Naive thymus-derived CD4-positive, alpha-beta T cell (primary cell): ENCODE measurements at regions of chr2 and their contacts with region 1.

Region 1: GRCh38 chr2:148644883-148645538 is 460 bp downstream of the EPC2 start:
- DNase-seq: peak; percentile 90 to 99 (median 95)
- ATAC-seq: peak; percentile 84
- H3K4me3 ChIP-seq: peak overlapping the region; percentile 69
- H3K4me3 Mint-ChIP-seq: peak overlapping the region; percentile 79 to 99 (median 96)
- H3K27ac ChIP-seq: peak overlapping the region; percentile 94
- H3K27ac Mint-ChIP-seq: peak overlapping the region; percentile 81 to 99 (median 97)
- H3K4me1 ChIP-seq: peaks cover 21 to 22% of the 10 kb centered on the region in 2 donors
- H3K4me1 Mint-ChIP-seq: peaks cover 32 to 48% (median 37%) of the 10 kb centered on the region in 7 donors
- H3K27me3 ChIP-seq: no peaks in the 10 kb centered on the region
- H3K27me3 Mint-ChIP-seq: peaks cover 0 to 12% (median 0%) of the 10 kb centered on the region in 5 donors

Region 2: DNA sequence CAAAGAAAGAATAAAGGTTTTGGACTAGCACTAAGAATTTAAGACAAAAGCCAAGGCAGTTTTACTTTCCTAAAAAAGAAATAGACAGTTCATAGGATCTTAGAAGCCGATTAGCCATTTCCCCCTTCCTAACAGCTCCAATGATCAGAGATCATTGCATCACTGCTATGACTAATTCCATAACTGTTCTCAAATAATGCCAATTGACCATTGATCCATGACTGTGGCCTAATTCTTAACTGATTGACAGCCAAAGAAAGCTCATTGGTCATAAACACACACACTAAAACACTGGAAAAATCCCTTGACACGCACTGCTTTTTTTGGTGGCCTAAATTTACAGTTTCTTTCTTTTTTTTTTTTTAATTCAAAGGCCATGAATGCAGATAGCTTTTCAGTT is 1145.2 kb before region 1 on chr2:
- CTCF ChIA-PET with region 1: no interaction called
- POLR2A ChIA-PET with region 1: no interaction called
- intact Hi-C with region 1: loop called in 1 of 2 experiments (anchors 10 kb)
- DNase-seq: no peak
- ATAC-seq: no peak
- H3K4me3 ChIP-seq: no peak overlapping the region
- H3K4me3 Mint-ChIP-seq: peak overlapping the region in 9 of 10 donors; percentile 40 to 80 (median 65)
- H3K27ac ChIP-seq: no peak overlapping the region
- H3K27ac Mint-ChIP-seq: peak overlapping the region in 8 of 9 donors; percentile 24 to 93 (median 65)
- H3K4me1 ChIP-seq: peaks cover 9 to 13% of the 10 kb centered on the region in 2 donors
- H3K4me1 Mint-ChIP-seq: peaks cover 23 to 61% (median 35%) of the 10 kb centered on the region in 7 donors
- H3K27me3 ChIP-seq: no peaks in the 10 kb centered on the region
- H3K27me3 Mint-ChIP-seq: no peaks in the 10 kb centered on the region

Region 3: DNA sequence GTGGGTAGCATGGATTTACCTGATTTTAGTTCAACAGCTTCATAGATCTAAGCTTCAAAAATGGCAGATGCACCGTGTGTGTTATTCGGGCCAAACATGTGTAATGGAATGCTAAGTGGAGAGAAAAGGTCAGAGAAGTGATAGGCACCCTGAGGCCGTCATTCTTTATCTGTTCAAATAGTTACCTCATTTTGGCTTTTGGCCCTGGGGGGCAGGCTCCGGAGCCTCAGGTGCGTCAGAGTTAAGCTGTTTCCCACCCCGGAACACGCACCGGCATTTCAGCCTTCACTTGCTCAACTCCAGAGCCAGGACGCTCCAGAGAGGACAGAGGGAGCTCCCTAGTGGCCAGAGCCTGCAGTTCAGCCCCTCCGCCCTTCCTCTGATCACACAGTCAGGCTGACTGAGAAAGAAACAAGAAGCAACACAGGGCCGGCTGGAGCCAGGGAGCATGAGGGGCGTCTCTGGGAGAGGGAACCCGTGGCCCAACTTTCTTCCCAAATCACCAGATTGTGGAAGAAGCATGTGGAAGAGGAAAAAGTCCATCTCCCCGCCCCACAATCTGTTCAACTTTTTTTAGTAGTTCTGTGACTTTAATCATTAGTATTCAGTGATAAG is 135.6 kb before region 1 on chr2:
- CTCF ChIA-PET with region 1: interaction called, 4 read pairs
- POLR2A ChIA-PET with region 1: interaction called, 12 read pairs
- intact Hi-C with region 1: loop called (anchors 1 kb)
- DNase-seq: peak; percentile 54 to 86 (median 78)
- ATAC-seq: peak; percentile 100
- H3K4me3 ChIP-seq: peak overlapping the region; percentile 51
- H3K4me3 Mint-ChIP-seq: peak overlapping the region; percentile 65 to 91 (median 84)
- H3K27ac ChIP-seq: peak overlapping the region; percentile 37
- H3K27ac Mint-ChIP-seq: peak overlapping the region; percentile 13 to 90 (median 88)
- H3K4me1 ChIP-seq: no peaks in the 10 kb centered on the region
- H3K4me1 Mint-ChIP-seq: peaks cover 3 to 29% (median 16%) of the 10 kb centered on the region in 7 donors
- H3K27me3 ChIP-seq: no peaks in the 10 kb centered on the region
- H3K27me3 Mint-ChIP-seq: no peaks in the 10 kb centered on the region

Region 4: GRCh38 chr2:148582679-148583511 is 62.1 kb before region 1 on chr2:
- CTCF ChIA-PET with region 1: no interaction called
- POLR2A ChIA-PET with region 1: no interaction called
- intact Hi-C with region 1: no loop called
- DNase-seq: no peak
- ATAC-seq: no peak
- H3K4me3 ChIP-seq: no peak overlapping the region
- H3K4me3 Mint-ChIP-seq: no peak overlapping the region
- H3K27ac ChIP-seq: no peak overlapping the region
- H3K27ac Mint-ChIP-seq: no peak overlapping the region
- H3K4me1 ChIP-seq: no peaks in the 10 kb centered on the region
- H3K4me1 Mint-ChIP-seq: peaks cover 0 to 7% (median 5%) of the 10 kb centered on the region in 7 donors
- H3K27me3 ChIP-seq: no peaks in the 10 kb centered on the region
- H3K27me3 Mint-ChIP-seq: peaks cover 0 to 21% (median 6%) of the 10 kb centered on the region in 5 donors

Region 5: GRCh38 chr2:148603562-148603920 is 41.5 kb before region 1 on chr2:
- CTCF ChIA-PET with region 1: no interaction called
- POLR2A ChIA-PET with region 1: no interaction called
- intact Hi-C with region 1: loop called in 1 of 2 experiments (anchors 1 kb)
- DNase-seq: no peak
- ATAC-seq: no peak
- H3K4me3 ChIP-seq: no peak overlapping the region
- H3K4me3 Mint-ChIP-seq: peak overlapping the region in 1 of 10 donors; percentile 17
- H3K27ac ChIP-seq: no peak overlapping the region
- H3K27ac Mint-ChIP-seq: peak overlapping the region in 1 of 9 donors; percentile 56
- H3K4me1 ChIP-seq: no peaks in the 10 kb centered on the region
- H3K4me1 Mint-ChIP-seq: peaks cover 0 to 16% (median 2%) of the 10 kb centered on the region in 7 donors
- H3K27me3 ChIP-seq: no peaks in the 10 kb centered on the region
- H3K27me3 Mint-ChIP-seq: peaks cover 0 to 5% (median 0%) of the 10 kb centered on the region in 5 donors

Region 6: GRCh38 chr2:148627224-148627623 is 17.8 kb before region 1 on chr2:
- CTCF ChIA-PET with region 1: no interaction called
- POLR2A ChIA-PET with region 1: no interaction called
- intact Hi-C with region 1: no loop called
- DNase-seq: no peak
- ATAC-seq: no peak
- H3K4me3 ChIP-seq: no peak overlapping the region
- H3K4me3 Mint-ChIP-seq: no peak overlapping the region
- H3K27ac ChIP-seq: no peak overlapping the region
- H3K27ac Mint-ChIP-seq: no peak overlapping the region
- H3K4me1 ChIP-seq: no peaks in the 10 kb centered on the region
- H3K4me1 Mint-ChIP-seq: peaks cover 0 to 8% (median 5%) of the 10 kb centered on the region in 7 donors
- H3K27me3 ChIP-seq: no peaks in the 10 kb centered on the region
- H3K27me3 Mint-ChIP-seq: peaks cover 0 to 5% (median 0%) of the 10 kb centered on the region in 5 donors

Region 7: GRCh38 chr2:148674063-148675020 is 29.3 kb after region 1 on chr2:
- CTCF ChIA-PET with region 1: no interaction called
- POLR2A ChIA-PET with region 1: interaction called, 3 read pairs
- intact Hi-C with region 1: loop called (anchors 1 to 2 kb)
- DNase-seq: peak in 6 of 9 donors; percentile 13 to 56 (median 32)
- ATAC-seq: peak; percentile 85
- H3K4me3 ChIP-seq: no peak overlapping the region
- H3K4me3 Mint-ChIP-seq: peak overlapping the region in 9 of 10 donors; percentile 16 to 77 (median 46)
- H3K27ac ChIP-seq: no peak overlapping the region
- H3K27ac Mint-ChIP-seq: peak overlapping the region in 6 of 9 donors; percentile 18 to 85 (median 44)
- H3K4me1 ChIP-seq: peaks cover 6 to 26% of the 10 kb centered on the region in 2 donors
- H3K4me1 Mint-ChIP-seq: peaks cover 44 to 88% (median 83%) of the 10 kb centered on the region in 7 donors
- H3K27me3 ChIP-seq: no peaks in the 10 kb centered on the region
- H3K27me3 Mint-ChIP-seq: no peaks in the 10 kb centered on the region

Region 8: GRCh38 chr2:148926291-148926961 is 281.4 kb after region 1 on chr2:
- CTCF ChIA-PET with region 1: no interaction called
- POLR2A ChIA-PET with region 1: interaction called, 3 read pairs
- intact Hi-C with region 1: loop called (anchors 1 to 5 kb)
- DNase-seq: peak; percentile 21 to 60 (median 48)
- ATAC-seq: peak; percentile 89
- H3K4me3 ChIP-seq: peak overlapping the region; percentile 43
- H3K4me3 Mint-ChIP-seq: peak overlapping the region; percentile 77 to 88 (median 84)
- H3K27ac ChIP-seq: no peak overlapping the region
- H3K27ac Mint-ChIP-seq: peak overlapping the region; percentile 29 to 94 (median 83)
- H3K4me1 ChIP-seq: peaks cover 0 to 7% of the 10 kb centered on the region in 2 donors
- H3K4me1 Mint-ChIP-seq: peaks cover 9 to 29% (median 22%) of the 10 kb centered on the region in 7 donors
- H3K27me3 ChIP-seq: no peaks in the 10 kb centered on the region
- H3K27me3 Mint-ChIP-seq: no peaks in the 10 kb centered on the region